ENCODE measurements at regions of chr3 and their contacts with region 1.

Region 1: GRCh38 chr3:177057768-177058167 is 139.5 kb downstream of the TBL1XR1 start:
- DNase-seq: peak; percentile 13 to 46 (median 35)
- H3K4me3 ChIP-seq: no peak overlapping the region
- H3K4me3 Mint-ChIP-seq: no peak overlapping the region
- H3K27ac ChIP-seq: no peak overlapping the region
- H3K27ac Mint-ChIP-seq: no peak overlapping the region
- H3K4me1 ChIP-seq: peaks cover 44% of the 10 kb centered on the region
- H3K4me1 Mint-ChIP-seq: peaks cover 25 to 37% (median 29%) of the 10 kb centered on the region in 4 donors
- H3K27me3 ChIP-seq: no peaks in the 10 kb centered on the region
- H3K27me3 Mint-ChIP-seq: no peaks in the 10 kb centered on the region

Region 2: DNA sequence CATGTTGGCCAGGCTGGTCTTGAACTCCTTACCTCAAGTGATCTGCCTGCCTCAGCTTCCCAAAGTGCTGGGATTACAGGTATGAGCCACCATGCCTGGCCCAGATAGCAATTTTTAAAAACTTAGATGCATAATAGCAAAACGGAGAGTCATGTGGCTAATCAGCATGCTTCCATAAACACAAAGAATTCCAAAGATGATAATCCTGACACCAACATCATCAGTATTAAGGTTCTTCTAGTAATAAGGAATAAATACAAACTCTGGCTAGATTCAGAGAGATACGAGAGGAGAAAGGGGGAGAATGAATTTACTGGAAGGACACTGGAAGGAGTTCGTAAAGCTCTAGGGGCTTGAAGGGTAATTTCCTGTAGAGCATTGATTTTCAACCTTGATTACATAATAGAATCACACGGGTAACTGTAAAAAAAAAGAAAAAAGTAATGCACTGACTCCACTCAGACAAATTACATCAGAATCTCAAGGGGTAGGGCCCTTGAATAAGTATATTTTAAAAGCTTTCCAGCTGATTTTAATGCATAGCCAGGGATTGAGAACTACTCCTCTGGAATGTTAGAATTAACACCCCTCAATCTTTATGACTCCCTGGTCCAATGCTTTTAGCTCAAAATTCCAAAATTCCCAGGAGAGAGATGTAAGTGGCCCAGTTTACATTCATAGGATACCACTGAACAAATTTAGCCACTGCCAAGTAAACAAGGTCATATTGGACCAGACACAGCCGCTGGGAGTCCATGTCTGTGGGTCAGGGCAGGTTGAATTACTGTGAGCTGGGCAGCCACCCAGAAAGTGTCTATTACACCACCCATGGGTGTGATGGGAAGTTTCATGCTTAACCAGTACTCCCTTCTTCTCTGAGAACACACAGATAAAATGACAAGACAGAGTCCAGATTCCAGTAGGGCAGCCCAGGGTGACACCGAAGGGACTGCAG is 104.4 kb before region 1 on chr3:
- CTCF ChIA-PET with region 1: no interaction called
- POLR2A ChIA-PET with region 1: no interaction called
- intact Hi-C with region 1: no loop called
- DNase-seq: no peak
- H3K4me3 ChIP-seq: no peak overlapping the region
- H3K4me3 Mint-ChIP-seq: no peak overlapping the region
- H3K27ac ChIP-seq: no peak overlapping the region
- H3K27ac Mint-ChIP-seq: no peak overlapping the region
- H3K4me1 ChIP-seq: no peaks in the 10 kb centered on the region
- H3K4me1 Mint-ChIP-seq: no peaks in the 10 kb centered on the region
- H3K27me3 ChIP-seq: no peaks in the 10 kb centered on the region
- H3K27me3 Mint-ChIP-seq: peaks cover 2 to 3% of the 10 kb centered on the region in 2 donors

Region 3: DNA sequence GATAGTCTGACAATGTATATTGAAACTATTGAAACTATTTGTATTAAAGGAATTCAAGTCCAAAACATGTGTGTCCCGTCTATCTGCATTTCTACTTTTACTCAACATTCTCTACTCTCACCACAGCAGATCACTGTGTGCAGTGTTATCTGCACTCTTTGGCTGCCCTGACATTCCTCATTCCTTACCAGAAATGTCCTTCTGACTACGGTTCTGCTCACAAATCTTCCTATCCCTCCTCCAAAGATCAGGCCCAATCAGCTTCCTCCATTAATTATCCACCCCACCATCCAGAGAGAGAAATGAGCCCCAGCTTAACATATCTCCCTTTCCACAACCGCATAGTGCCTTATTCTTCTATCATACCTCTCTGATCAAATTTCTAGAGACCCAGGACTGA is 44.8 kb after region 1 on chr3:
- CTCF ChIA-PET with region 1: no interaction called
- POLR2A ChIA-PET with region 1: no interaction called
- intact Hi-C with region 1: loop called (anchors 5 kb)
- DNase-seq: no peak
- H3K4me3 ChIP-seq: no peak overlapping the region
- H3K4me3 Mint-ChIP-seq: peak overlapping the region in 2 of 8 donors; percentile 1 to 10
- H3K27ac ChIP-seq: no peak overlapping the region
- H3K27ac Mint-ChIP-seq: peak overlapping the region; percentile 4 to 48 (median 33)
- H3K4me1 ChIP-seq: peaks cover 61% of the 10 kb centered on the region
- H3K4me1 Mint-ChIP-seq: peaks cover 40 to 67% (median 53%) of the 10 kb centered on the region in 4 donors
- H3K27me3 ChIP-seq: no peaks in the 10 kb centered on the region
- H3K27me3 Mint-ChIP-seq: no peaks in the 10 kb centered on the region

Region 4: GRCh38 chr3:177144923-177145780 is 87.4 kb after region 1 on chr3:
- CTCF ChIA-PET with region 1: no interaction called
- POLR2A ChIA-PET with region 1: interaction called, 4 read pairs
- intact Hi-C with region 1: loop called (anchors 5 kb)
- DNase-seq: peak; percentile 48 to 72 (median 60)
- H3K4me3 ChIP-seq: no peak overlapping the region
- H3K4me3 Mint-ChIP-seq: peak overlapping the region; percentile 57 to 78 (median 72)
- H3K27ac ChIP-seq: peak overlapping the region; percentile 61
- H3K27ac Mint-ChIP-seq: peak overlapping the region; percentile 82 to 96 (median 92)
- H3K4me1 ChIP-seq: peaks cover 93% of the 10 kb centered on the region
- H3K4me1 Mint-ChIP-seq: peaks cover 63 to 84% (median 70%) of the 10 kb centered on the region in 4 donors
- H3K27me3 ChIP-seq: no peaks in the 10 kb centered on the region
- H3K27me3 Mint-ChIP-seq: no peaks in the 10 kb centered on the region

Region 5: DNA sequence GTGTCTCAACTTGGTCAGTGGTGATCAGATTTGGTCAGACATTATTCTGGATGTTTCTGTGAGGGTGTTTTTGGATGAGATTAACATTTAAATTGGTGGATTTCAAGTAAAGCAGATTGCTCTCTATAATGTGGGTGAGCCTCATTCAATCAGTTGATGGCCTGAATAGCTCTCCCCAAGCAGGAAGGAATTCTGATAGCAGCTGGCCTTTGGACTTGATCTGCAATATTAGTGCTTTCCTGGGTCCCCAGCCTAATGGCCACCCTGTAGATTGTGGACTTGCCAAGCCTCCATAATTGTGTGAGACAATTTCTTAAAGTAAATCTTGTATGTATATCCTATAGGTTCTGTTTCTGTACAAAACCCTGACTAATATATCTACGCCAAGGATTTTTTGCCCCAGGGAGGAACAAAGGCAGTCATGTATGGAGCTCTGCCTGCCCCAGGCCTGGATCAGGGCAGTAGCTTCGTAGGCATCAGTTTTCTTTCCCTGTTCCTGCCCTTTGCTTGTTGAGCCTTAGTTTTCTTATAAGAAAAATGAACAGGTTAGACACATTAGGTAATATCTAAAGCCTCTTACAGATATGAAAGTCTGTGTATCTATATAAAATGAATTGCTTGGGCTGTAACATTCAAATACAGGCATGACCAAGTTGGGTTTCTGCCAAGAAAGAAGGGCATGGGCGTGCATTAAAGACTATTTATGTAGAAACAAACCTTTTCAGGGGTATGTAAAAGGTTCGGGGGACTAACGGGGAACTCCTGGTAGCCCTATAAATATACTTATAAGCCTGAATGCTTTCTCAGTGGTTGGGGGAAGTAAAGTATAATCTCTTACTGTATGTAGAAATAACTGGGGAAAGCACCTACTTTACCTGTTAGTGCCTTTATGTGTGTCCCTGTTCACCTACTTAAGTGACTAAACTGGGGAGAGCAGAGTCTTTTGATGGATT is 293.7 kb after region 1 on chr3:
- CTCF ChIA-PET with region 1: no interaction called
- POLR2A ChIA-PET with region 1: no interaction called
- intact Hi-C with region 1: no loop called
- DNase-seq: no peak
- H3K4me3 ChIP-seq: no peak overlapping the region
- H3K4me3 Mint-ChIP-seq: no peak overlapping the region
- H3K27ac ChIP-seq: no peak overlapping the region
- H3K27ac Mint-ChIP-seq: peak overlapping the region in 2 of 7 donors; percentile 2 to 4
- H3K4me1 ChIP-seq: peaks cover 5% of the 10 kb centered on the region
- H3K4me1 Mint-ChIP-seq: peaks cover 9 to 22% (median 10%) of the 10 kb centered on the region in 4 donors
- H3K27me3 ChIP-seq: no peaks in the 10 kb centered on the region
- H3K27me3 Mint-ChIP-seq: no peaks in the 10 kb centered on the region